OCI-LY7 (cell line): ENCODE measurements at regions of chr3 and their contacts with region 1.

Region 1: DNA sequence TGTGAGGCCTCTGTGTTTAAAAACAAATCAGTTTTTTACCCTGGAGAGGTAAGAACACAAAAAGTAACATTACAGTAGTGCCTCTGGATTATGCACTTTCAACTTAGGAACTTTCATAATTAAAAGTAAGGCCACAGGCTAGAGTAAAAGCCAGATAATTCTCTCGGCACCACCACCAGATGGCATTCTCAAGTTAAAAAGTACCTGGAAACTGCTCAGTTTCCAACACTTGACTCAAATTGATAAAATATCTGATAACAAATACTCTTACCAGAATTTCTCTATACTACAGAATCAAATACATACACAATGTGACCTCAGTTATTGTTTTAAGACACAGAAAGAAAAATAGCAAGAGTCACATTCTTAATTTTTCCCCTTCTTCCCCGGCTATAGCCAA is 19.9 kb downstream of the SPICE1 start:
- DNase-seq: peak; percentile 55
- H3K4me3 ChIP-seq: no peak overlapping the region
- H3K27ac ChIP-seq: no peak overlapping the region
- H3K4me1 ChIP-seq: no peaks in the 10 kb centered on the region
- CTCF ChIP-seq: peak; percentile 85

Region 2: DNA sequence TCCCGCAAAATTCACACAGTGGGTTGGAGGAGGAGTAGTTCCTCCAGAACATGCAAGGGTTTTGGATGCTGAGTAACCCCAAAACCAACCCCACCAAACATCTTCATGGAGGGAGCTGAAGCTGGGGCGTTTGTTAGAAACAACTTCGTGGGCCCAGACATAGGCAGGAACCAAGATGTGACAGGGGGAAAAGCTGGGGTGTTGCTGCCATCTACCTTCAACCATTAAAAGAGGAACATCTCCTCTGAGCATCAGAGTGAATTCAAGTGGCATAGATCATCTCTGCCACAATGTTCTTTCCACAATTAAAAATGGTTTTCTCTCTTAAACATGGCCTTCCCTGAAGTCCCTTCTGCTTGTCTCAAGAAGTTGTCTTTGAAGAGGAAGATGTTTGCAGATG is 57.8 kb after region 1 on chr3:
- CTCF ChIA-PET with region 1: no interaction called
- POLR2A ChIA-PET with region 1: interaction called, 5 read pairs
- intact Hi-C with region 1: loop called (anchors 1 kb)
- DNase-seq: peak; percentile 26
- H3K4me3 ChIP-seq: no peak overlapping the region
- H3K27ac ChIP-seq: no peak overlapping the region
- H3K4me1 ChIP-seq: no peaks in the 10 kb centered on the region
- CTCF ChIP-seq: peak; percentile 62

Region 3: GRCh38 chr3:113626503-113627371 is 131.7 kb after region 1 on chr3:
- CTCF ChIA-PET with region 1: interaction called, 4 read pairs
- POLR2A ChIA-PET with region 1: interaction called, 7 read pairs
- intact Hi-C with region 1: loop called (anchors 1 kb)
- DNase-seq: peak; percentile 64
- H3K4me3 ChIP-seq: no peak overlapping the region
- H3K27ac ChIP-seq: no peak overlapping the region
- H3K4me1 ChIP-seq: peaks cover 27% of the 10 kb centered on the region
- CTCF ChIP-seq: peak; percentile 86

Region 4: DNA sequence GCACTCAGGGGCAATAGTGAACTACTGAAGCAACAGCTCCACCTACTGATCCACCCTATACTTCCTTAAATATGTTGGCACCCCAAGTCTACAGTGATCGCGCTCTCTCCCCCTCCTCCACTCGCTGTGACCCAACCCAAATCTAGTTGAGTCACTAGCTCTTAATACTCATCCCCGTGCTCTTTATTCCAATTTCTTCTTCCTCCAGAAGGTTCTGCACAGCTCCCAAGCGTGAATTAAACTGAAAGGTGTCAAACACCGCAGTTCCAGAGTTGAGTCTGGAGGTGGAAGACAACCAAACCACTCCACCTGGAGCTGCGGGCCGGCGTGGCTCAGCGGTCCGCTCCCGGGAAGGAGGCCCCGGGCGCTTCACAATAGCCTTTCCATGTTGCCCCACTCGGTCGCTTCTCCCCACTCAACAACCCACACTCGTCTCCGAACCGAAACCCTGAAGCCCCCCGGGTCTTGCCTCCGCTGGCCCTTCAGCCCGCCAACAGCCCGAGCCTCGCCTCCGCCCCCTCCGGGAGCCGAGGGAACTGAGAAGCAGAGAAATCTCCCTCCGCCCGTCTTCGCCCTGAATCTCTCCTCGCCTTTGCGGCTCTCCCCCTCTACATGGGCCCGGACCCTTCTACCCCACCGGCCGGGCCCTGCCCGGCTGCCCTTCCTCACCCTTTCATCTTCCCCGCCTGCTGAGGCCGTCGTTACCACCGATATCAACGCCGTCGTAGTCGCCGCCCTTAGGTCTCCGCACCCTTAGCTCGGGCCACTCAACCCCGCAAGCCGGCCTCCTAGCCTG is 250.4 kb after region 1 on chr3:
- CTCF ChIA-PET with region 1: no interaction called
- POLR2A ChIA-PET with region 1: no interaction called
- intact Hi-C with region 1: loop called (anchors 5 kb)
- DNase-seq: peak; percentile 88
- H3K4me3 ChIP-seq: peak overlapping the region; percentile 83
- H3K27ac ChIP-seq: peak overlapping the region; percentile 95
- H3K4me1 ChIP-seq: peaks cover 56% of the 10 kb centered on the region
- CTCF ChIP-seq: peak; percentile 85